Tibial artery (tissue), 4 donors: ENCODE measurements at regions of chr11 and their contacts with region 1.

Region 1: GRCh38 chr11:111777094-111778046 is 11.2 kb upstream of the PPP2R1B start:
- DNase-seq: no peak
- H3K4me3 ChIP-seq: no peak overlapping the region
- H3K27ac ChIP-seq: no peak overlapping the region
- H3K4me1 ChIP-seq: peaks cover 0 to 16% (median 5%) of the 10 kb centered on the region in 4 donors
- H3K27me3 ChIP-seq: no peaks in the 10 kb centered on the region
- CTCF ChIP-seq: peak; percentile 71 to 85

Region 2: DNA sequence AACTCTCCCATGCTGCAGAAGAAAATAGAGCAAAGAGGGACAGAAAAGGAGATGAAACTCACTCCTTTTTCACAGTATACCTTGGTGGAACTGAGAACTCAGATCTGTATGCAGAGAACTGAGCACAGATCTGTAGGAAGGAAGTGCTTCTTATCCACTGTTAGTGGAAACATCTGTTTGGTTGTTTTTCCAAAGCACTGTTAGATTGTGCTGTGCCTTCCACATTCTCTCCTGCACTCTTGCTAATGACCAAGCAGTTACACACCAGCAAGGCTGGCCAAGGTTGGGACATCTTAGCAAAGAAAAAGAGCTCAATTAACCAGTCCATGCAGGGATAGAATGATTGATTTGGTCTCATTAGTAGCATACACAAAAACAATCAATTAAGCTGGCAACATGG is 195.2 kb before region 1 on chr11:
- intact Hi-C with region 1: loop called (anchors 5 kb)
- DNase-seq: no peak
- H3K4me3 ChIP-seq: no peak overlapping the region
- H3K27ac ChIP-seq: no peak overlapping the region
- H3K4me1 ChIP-seq: peaks cover 0 to 4% (median 0%) of the 10 kb centered on the region in 4 donors
- H3K27me3 ChIP-seq: no peaks in the 10 kb centered on the region
- CTCF ChIP-seq: no peak

Region 3: DNA sequence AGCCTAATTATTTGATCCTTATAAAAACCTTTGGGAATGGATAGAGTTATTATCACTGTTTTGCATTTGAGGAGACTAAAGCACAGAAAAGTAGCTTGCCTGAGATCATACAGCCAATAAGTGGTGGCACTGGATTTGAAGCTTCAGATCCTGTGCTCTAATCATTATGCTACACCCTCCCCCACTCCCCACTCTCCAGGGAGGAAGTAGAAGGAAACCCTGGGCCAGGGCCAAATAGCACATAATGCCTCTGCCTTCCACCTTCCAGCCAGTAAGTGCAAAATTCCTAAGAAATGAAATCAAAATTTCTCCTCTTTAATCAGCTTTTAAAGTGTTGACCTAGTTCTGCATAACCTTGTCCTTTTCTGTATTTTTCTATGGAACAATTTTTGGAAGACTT is 113.5 kb before region 1 on chr11:
- intact Hi-C with region 1: no loop called
- DNase-seq: peak in 1 of 2 donors; percentile 52
- H3K4me3 ChIP-seq: no peak overlapping the region
- H3K27ac ChIP-seq: no peak overlapping the region
- H3K4me1 ChIP-seq: peaks cover 0 to 12% (median 4%) of the 10 kb centered on the region in 4 donors
- H3K27me3 ChIP-seq: no peaks in the 10 kb centered on the region
- CTCF ChIP-seq: no peak

Region 4: DNA sequence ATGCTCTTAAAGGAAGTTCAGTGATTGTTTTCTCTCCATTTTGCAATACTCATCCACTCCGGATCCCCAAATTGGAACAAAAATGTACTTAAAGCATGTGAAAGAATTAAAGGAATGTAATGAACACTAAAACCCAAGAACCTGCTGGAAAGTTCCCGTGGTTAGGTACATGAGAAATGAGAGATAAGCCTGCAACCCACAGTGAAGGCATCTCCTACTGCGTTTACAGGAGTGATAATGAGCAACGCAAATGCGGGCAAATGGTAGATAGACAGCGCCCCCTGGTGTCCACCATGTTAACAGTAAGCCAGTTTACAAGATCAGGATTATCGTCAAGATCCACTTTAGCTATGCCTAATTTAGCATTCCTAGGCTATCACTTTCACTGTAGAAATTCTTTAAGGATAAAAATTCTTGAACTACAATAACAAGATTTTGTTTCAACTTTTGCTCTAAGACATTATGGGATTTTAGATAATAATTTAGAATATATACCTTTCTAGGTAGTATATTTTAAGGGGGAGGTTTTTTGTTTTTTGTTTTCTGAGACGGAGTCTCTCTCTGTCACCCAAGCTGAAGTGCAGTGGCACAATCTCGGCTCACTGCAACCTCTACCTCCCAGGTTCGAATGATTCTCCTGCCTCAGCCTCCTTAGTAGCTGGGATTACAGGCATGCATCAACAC is 64.1 kb after region 1 on chr11:
- intact Hi-C with region 1: loop called (anchors 5 kb)
- DNase-seq: peak; percentile 91
- H3K4me3 ChIP-seq: no peak overlapping the region
- H3K27ac ChIP-seq: peak overlapping the region in 1 of 2 donors; percentile 19
- H3K4me1 ChIP-seq: peaks cover 0 to 11% (median 0%) of the 10 kb centered on the region in 4 donors
- H3K27me3 ChIP-seq: no peaks in the 10 kb centered on the region
- CTCF ChIP-seq: peak; percentile 81 to 88